ENCODE measurements at regions of chr11 and their contacts with region 1.

Region 1: DNA sequence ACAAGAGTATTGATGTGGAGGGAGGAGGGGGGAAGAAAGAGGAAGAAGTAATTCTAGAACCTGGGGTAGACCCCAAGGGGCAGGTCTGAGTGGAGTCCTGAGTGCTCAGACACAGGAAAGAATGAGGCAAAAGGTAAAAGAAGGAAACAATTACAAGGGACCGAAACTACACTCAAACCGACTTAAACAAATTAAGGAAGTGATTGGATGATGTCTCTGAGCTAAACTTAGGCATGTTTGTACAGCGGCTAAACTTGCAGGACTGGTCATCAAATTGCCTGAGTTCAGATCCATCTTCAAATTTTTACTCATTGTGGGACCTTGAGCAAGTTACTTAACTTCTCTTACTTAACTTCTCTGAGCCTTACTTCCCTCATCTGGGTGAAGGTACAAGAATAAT is 86.3 kb upstream of the LRRC55 start:
- DNase-seq: no peak
- H3K4me3 ChIP-seq: no peak overlapping the region
- H3K27ac ChIP-seq: no peak overlapping the region
- H3K4me1 ChIP-seq: no peaks in the 10 kb centered on the region
- H3K27me3 ChIP-seq: peaks cover 3% of the 10 kb centered on the region
- CTCF ChIP-seq: no peak

Region 2: DNA sequence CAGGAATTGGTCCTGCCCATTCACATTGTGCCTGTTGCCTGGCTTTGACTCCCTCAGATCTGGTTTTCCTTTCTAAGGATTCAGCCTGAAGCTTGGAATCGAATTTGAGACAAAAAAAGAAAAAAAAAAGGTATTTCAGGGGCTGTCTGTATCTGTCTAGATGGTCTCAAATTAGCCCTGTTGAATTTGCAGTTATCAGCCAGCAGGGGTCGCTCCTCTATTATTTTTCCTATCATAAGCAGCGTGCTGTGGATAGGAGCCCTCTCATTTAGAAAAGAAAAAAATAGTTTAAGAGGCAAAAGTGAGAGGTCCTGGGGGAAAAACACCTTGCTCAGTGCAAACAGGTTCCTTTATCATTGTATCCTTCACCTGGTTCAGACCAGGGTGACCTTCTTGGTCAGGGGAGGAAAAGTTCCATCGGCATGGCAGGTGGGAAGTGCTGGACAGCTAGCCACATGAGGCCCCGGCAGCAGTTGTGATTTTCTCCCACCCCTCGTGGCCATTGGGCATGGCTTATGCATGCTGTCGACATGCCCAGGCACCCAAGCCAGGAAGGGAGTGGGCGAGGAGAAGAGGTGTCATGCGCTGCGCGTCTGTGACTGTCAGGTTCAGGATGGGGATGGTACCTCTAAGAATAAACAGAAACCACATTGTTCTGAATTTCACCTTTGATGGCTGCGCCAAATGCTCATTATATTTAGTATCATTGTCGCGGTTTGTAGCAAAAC is 93.6 kb before region 1 on chr11:
- CTCF ChIA-PET with region 1: no interaction called
- dilution Hi-C with region 1: no loop called
- in situ Hi-C with region 1: no loop called
- intact Hi-C with region 1: no loop called
- DNase-seq: peak; percentile 9
- H3K4me3 ChIP-seq: no peak overlapping the region
- H3K27ac ChIP-seq: no peak overlapping the region
- H3K4me1 ChIP-seq: no peaks in the 10 kb centered on the region
- H3K27me3 ChIP-seq: no peaks in the 10 kb centered on the region
- CTCF ChIP-seq: peak; percentile 41 to 48

Region 3: DNA sequence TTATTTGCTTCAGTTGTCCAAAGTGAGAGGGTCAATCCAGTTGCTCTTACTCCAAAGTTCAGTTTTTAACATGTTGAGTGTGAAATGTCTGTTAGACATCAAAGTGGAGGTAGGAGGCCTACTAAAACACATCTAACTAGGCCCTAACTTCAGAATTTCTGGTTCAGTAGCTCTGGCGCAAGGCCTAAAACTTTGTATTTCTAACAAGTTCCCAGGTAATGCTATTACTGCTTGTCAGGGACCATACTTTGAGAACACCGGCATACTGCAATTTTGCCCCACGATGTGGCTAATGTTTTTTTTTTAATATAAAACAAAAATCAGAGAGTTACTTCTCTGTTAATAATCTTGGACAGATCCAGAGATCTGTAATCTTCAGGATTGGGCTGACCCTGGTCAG is 13.9 kb after region 1 on chr11:
- CTCF ChIA-PET with region 1: no interaction called
- dilution Hi-C with region 1: no loop called
- in situ Hi-C with region 1: no loop called
- intact Hi-C with region 1: no loop called
- DNase-seq: no peak
- H3K4me3 ChIP-seq: no peak overlapping the region
- H3K27ac ChIP-seq: no peak overlapping the region
- H3K4me1 ChIP-seq: no peaks in the 10 kb centered on the region
- H3K27me3 ChIP-seq: no peaks in the 10 kb centered on the region
- CTCF ChIP-seq: no peak

Region 4: GRCh38 chr11:57191314-57192219 is 96.2 kb after region 1 on chr11:
- CTCF ChIA-PET with region 1: no interaction called
- dilution Hi-C with region 1: loop called (anchors 5 kb)
- in situ Hi-C with region 1: no loop called
- intact Hi-C with region 1: no loop called
- DNase-seq: no peak
- H3K4me3 ChIP-seq: no peak overlapping the region
- H3K27ac ChIP-seq: no peak overlapping the region
- H3K4me1 ChIP-seq: peaks cover 4% of the 10 kb centered on the region
- H3K27me3 ChIP-seq: no peaks in the 10 kb centered on the region
- CTCF ChIP-seq: no peak

Measured in mammary epithelial cell (primary cell).